WTC11 (cell line): ENCODE measurements at regions of chr17 and their contacts with region 1.

Region 1: DNA sequence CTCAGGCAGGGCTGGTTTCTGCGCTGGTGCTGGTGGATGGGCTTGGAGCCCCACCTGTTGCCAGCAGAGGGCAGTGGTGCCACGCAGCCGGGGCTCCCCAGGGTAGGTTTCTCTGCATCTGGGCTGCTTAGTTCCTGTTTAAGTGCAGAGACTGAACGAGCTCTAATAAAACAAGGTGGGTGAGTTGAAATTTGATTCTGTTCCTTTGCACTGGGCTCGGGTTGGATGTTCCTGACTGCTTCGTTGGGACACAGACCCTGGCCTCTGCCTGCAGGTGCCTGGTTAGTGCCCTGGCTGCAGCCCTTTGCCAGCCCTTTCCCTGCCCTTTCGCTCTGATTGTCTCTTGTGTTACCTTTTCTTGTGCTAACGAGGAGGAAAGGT is 30.0 kb downstream of the TBCD start:
- DNase-seq: peak; percentile 87
- ATAC-seq: peak; percentile 98
- H3K4me3 Mint-ChIP-seq: no peak overlapping the region
- H3K27ac Mint-ChIP-seq: 0 out of 2 replicates have a peak overlapping the region, but pooled peaks have one; percentile 8
- H3K4me1 Mint-ChIP-seq: peaks cover 5% of the 10 kb centered on the region
- H3K27me3 Mint-ChIP-seq: no peaks in the 10 kb centered on the region
- CTCF ChIP-seq: peak; percentile 77

Region 2: DNA sequence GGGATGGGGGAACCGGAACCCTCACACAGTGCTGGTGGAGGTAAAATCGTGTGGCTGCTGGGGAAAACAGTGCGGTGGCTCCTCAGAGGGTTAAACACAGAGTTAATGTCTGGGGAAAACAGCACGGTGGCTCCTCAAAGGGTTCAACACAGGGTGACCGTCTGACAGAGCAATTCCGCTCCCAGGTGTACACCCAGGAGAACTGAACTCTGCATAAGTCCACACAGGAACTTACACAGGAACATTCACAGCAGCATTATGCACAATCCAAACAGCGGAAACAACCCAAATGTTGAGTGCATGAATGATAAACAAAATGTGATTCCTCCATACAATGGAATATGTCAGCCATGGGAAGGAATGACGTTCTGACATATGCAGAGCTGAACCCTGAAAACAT is 620.7 kb before region 1 on chr17:
- CTCF ChIA-PET with region 1: no interaction called
- POLR2A ChIA-PET with region 1: no interaction called
- DNase-seq: no peak
- ATAC-seq: no peak
- H3K4me3 Mint-ChIP-seq: no peak overlapping the region
- H3K27ac Mint-ChIP-seq: no peak overlapping the region
- H3K4me1 Mint-ChIP-seq: no peaks in the 10 kb centered on the region
- H3K27me3 Mint-ChIP-seq: peaks cover 8% of the 10 kb centered on the region
- CTCF ChIP-seq: no peak

Region 3: GRCh38 chr17:82820278-82821251 is 38.7 kb after region 1 on chr17:
- CTCF ChIA-PET with region 1: interaction called, 10 read pairs
- POLR2A ChIA-PET with region 1: interaction called, 4 read pairs
- DNase-seq: no peak
- ATAC-seq: peak; percentile 76
- H3K4me3 Mint-ChIP-seq: no peak overlapping the region
- H3K27ac Mint-ChIP-seq: peak overlapping the region; percentile 83; the same call in 1 of the 2 replicates
- H3K4me1 Mint-ChIP-seq: peaks cover 40% of the 10 kb centered on the region
- H3K27me3 Mint-ChIP-seq: no peaks in the 10 kb centered on the region
- CTCF ChIP-seq: no peak

Region 4: DNA sequence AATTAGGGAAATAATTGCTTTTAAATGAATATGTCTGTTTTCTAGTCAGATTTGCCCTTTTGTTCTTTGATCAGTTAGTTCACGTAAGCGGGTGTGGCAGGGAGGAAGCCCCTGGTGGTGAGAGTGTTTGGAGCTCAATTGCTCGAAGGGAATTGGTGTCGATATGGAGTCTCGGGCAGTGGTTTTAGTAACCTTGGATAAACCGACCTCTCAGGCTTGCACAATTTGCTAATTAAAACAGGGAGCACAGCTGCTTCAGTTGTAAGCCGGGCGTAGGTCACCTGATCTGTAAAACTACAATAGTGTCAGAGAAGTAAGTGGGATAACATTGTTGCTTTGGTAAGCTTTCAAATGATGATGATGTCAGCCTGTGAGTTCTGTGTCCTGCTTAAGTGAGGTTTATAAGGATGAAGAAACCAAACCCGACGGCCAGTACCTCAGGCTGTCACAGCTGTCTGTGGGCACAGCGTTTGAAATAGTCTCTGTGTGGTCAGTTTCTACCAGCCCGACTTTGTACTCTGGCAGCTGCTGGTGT is 55.0 kb after region 1 on chr17:
- CTCF ChIA-PET with region 1: interaction called, 17 read pairs
- POLR2A ChIA-PET with region 1: no interaction called
- DNase-seq: no peak
- ATAC-seq: no peak
- H3K4me3 Mint-ChIP-seq: no peak overlapping the region
- H3K27ac Mint-ChIP-seq: peak overlapping the region; percentile 92
- H3K4me1 Mint-ChIP-seq: peaks cover 51% of the 10 kb centered on the region
- H3K27me3 Mint-ChIP-seq: no peaks in the 10 kb centered on the region
- CTCF ChIP-seq: no peak

Region 5: DNA sequence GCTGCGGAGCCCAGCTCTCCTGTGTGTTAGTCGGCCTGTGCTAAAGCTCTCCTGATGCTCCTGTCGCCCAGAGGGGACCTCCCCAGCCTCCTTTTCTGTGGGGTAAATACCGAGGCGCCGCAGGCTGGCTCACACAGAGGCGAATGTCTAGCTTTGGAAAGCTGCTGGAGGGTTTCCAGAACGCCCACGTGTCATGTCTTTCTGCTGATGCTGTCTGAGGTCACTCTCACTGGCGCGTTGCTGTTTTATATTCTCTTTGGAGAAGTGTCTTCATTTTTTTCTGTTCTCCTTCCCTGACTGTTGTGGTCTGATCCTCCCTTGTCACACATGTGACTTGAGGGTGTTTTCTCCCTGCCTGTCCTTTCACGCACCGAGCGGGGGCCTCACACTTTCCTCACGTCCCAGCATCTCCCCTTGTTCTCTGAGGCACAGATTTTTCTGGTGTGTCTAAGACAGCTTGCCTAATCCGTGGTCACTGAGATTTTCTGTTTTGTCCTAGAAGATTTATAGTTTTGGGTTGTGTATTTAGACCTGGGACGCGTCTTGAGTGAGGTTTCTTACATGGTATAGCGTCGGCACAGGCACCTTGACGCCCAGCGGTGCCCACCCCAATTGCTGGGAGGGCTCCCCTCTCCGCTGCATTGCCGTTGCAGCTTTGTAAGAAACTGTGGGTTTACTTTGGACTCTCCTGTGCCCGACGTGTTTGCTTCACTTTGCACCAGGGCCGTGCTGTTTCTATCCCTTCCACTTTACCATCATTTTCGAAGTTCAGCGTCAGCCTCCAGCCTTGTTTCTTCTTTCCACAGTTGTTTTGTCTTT is 150.0 kb after region 1 on chr17:
- CTCF ChIA-PET with region 1: interaction called, 12 read pairs
- POLR2A ChIA-PET with region 1: interaction called, 3 read pairs
- DNase-seq: peak; percentile 2
- ATAC-seq: no peak
- H3K4me3 Mint-ChIP-seq: no peak overlapping the region
- H3K27ac Mint-ChIP-seq: peak overlapping the region; percentile 88
- H3K4me1 Mint-ChIP-seq: no peaks in the 10 kb centered on the region; the same call in 1 of the 2 replicates
- H3K27me3 Mint-ChIP-seq: no peaks in the 10 kb centered on the region
- CTCF ChIP-seq: no peak